ENCODE measurements at regions of chr17 and their contacts with region 1.

Region 1: GRCh38 chr17:81394921-81395599 is at the start of gene BAHCC1:
- DNase-seq: peak; percentile 100
- ATAC-seq: peak; percentile 72
- H3K4me3 ChIP-seq: peak within 1 kb of the TSS; percentile 98
- H3K27ac ChIP-seq: peak within 1 kb of the TSS; percentile 80
- H3K4me1 ChIP-seq: peaks cover 31% of the 10 kb centered on the region
- H3K27me3 ChIP-seq: no peaks in the 10 kb centered on the region
- CTCF ChIP-seq: no peak
- total RNA-seq, gene BAHCC1: 9.9 and 16.9 TPM in 2 replicates

Region 2: GRCh38 chr17:81253358-81254131 is 141.5 kb before region 1 on chr17:
- CTCF ChIA-PET with region 1: interaction called, 3 read pairs
- POLR2A ChIA-PET with region 1: interaction called, 4 read pairs
- intact Hi-C with region 1: loop called (anchors 10 kb)
- DNase-seq: peak; percentile 44
- ATAC-seq: no peak
- H3K4me3 ChIP-seq: no peak overlapping the region
- H3K27ac ChIP-seq: no peak overlapping the region
- H3K4me1 ChIP-seq: 0 out of 2 replicates have a peak, but pooled peaks cover 3% of the 10 kb centered on the region
- H3K27me3 ChIP-seq: no peaks in the 10 kb centered on the region
- CTCF ChIP-seq: peak; percentile 85

Region 3: DNA sequence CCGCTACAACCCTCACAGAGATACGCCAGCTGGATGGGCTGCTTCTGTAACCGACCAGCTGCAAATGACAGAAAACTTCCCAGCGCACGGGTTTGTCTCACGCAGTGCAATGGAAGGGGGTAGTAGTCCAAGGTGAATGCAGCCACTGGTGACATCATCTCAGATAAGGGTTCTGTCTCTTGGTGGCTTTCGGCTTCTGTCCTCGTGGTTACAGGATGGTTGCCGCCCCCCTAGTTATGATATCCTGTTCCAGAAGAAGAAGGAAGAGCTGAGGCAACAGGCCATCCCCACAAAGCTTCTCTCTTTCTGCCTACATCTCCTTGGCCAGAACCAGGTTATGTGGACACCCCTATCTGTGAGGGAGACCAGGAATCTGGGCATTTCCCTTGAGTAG is 40.1 kb before region 1 on chr17:
- CTCF ChIA-PET with region 1: no interaction called
- POLR2A ChIA-PET with region 1: no interaction called
- intact Hi-C with region 1: no loop called
- DNase-seq: no peak
- ATAC-seq: no peak
- H3K4me3 ChIP-seq: no peak overlapping the region
- H3K27ac ChIP-seq: no peak overlapping the region
- H3K4me1 ChIP-seq: peaks cover 5% of the 10 kb centered on the region
- H3K27me3 ChIP-seq: no peaks in the 10 kb centered on the region
- CTCF ChIP-seq: no peak

Region 4: GRCh38 chr17:81365148-81365600 is 29.9 kb before region 1 on chr17:
- CTCF ChIA-PET with region 1: interaction called, 4 read pairs
- POLR2A ChIA-PET with region 1: interaction called, 3 read pairs
- intact Hi-C with region 1: loop called (anchors 2 kb)
- DNase-seq: peak; percentile 92
- ATAC-seq: peak; percentile 73
- H3K4me3 ChIP-seq: peak overlapping the region; percentile 67
- H3K27ac ChIP-seq: peak overlapping the region; percentile 90
- H3K4me1 ChIP-seq: peaks cover 37% of the 10 kb centered on the region
- H3K27me3 ChIP-seq: no peaks in the 10 kb centered on the region
- CTCF ChIP-seq: no peak

Region 5: GRCh38 chr17:81436294-81436849 is 41.3 kb after region 1 on chr17:
- CTCF ChIA-PET with region 1: no interaction called
- POLR2A ChIA-PET with region 1: interaction called, 17 read pairs
- intact Hi-C with region 1: no loop called
- DNase-seq: no peak
- ATAC-seq: no peak
- H3K4me3 ChIP-seq: no peak overlapping the region
- H3K27ac ChIP-seq: no peak overlapping the region
- H3K4me1 ChIP-seq: no peaks in the 10 kb centered on the region
- H3K27me3 ChIP-seq: no peaks in the 10 kb centered on the region
- CTCF ChIP-seq: no peak

Region 6: DNA sequence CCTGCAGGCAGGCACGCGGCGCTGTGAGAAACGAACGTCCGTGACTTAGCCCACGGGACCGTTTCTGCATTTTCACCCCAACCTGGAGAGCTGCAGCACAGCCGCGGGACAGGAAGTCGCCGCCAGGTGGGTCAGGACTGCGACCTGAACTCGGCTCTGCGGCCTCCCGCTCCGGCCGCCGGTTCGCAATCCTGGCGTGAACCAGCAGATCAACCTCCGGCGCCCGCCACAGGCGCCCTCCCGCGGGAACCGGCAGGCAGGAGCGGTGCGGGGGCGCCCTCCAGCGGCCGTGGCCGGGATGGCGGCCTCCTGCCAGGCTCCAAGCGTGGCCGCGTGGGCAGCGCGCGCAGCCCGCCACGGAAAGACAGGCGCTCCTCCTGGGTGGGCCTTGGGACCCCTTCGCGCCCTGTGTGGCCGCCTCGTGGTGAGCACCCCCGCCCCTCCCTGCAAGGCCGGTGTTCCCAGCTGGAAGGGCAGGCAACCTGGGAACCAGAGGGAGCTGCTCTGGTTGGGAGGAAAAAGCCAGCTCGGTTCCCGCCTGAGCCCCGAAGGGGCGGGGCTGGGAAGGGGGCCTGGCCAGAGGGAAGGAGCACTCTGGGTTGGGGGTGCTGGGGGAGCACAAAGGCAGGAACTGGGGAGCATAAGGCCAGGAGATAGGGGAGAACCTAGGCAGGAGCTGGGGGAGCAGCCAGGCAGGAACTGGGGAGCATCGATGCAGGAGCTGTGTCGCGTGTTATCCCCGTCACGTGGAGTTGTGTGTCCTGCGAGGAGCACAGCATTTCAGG is 89.3 kb after region 1 on chr17:
- CTCF ChIA-PET with region 1: interaction called, 10 read pairs
- POLR2A ChIA-PET with region 1: interaction called, 12 read pairs
- intact Hi-C with region 1: loop called (anchors 2 kb)
- DNase-seq: peak; percentile 89
- ATAC-seq: peak; percentile 75
- H3K4me3 ChIP-seq: peak overlapping the region; percentile 62
- H3K27ac ChIP-seq: no peak overlapping the region
- H3K4me1 ChIP-seq: peaks cover 15% of the 10 kb centered on the region
- H3K27me3 ChIP-seq: no peaks in the 10 kb centered on the region
- CTCF ChIP-seq: peak; percentile 92

Region 7: DNA sequence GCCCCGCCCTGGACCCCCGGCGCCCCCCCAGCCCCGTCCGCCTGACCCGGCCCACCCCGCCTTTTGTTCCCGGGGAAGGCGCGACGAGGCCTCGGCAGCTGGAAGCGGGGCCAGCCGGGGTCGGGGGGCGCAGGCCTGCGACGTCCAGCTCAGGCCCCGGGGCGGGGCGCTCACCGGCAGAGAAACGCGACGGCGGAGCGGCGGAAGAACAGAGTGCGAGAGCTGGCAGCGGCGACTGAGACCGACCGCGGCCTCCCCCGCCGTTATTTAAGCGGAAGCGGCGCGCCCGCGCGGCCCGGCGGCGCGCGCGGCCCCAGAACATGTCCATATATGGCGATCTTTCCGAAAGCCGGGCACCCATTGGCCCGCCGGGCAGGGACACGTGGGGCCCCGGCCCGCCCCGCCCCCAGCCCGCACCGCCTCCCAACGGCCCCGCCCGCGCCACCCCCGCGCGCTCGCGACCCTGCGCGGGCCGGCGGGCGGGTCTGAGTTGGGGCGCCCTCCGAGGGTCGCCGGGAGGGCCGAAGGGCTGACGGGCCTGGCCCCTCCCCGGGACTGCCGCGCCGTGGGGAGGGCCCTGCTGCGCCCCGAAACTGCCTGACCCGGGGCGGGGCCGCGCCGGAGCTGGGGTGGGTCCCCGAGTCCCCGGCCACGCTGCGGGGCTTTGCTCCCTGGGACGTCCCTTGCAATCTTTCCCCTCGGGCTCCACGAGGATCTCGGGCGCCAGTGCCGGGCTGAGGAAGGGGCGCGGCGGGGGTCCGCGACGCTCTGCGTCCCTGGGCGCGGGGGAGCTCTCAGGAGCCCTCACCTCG is 117.7 kb after region 1 on chr17 and contains the start of gene ACTG1:
- CTCF ChIA-PET with region 1: interaction called, 5 read pairs
- POLR2A ChIA-PET with region 1: no interaction called
- intact Hi-C with region 1: loop called (anchors 10 kb)
- DNase-seq: peak; percentile 95
- ATAC-seq: peak; percentile 25
- H3K4me3 ChIP-seq: peak within 1 kb of the TSS; percentile 99
- H3K27ac ChIP-seq: peak within 1 kb of the TSS; percentile 88
- H3K4me1 ChIP-seq: peaks cover 38% of the 10 kb centered on the region
- H3K27me3 ChIP-seq: no peaks in the 10 kb centered on the region
- CTCF ChIP-seq: no peak
- total RNA-seq, gene ACTG1: 4,503 and 4,798 TPM in 2 replicates

Measured in PC-3 (cell line).